HEK293 (cell line): ENCODE measurements at regions of chr6 and their contacts with region 1.

Region 1: GRCh38 chr6:99241905-99242534 is 107.5 kb downstream of the FAXC start:
- H3K4me3 ChIP-seq: no peak overlapping the region
- H3K27ac ChIP-seq: no peak overlapping the region
- H3K4me1 ChIP-seq: no peaks in the 10 kb centered on the region
- CTCF ChIP-seq: no peak; the same call in 1 of the 2 replicates

Region 2: GRCh38 chr6:99225172-99225571 is 16.8 kb before region 1 on chr6:
- CTCF ChIA-PET with region 1: interaction called, 21 read pairs
- POLR2A ChIA-PET with region 1: no interaction called
- H3K4me3 ChIP-seq: no peak overlapping the region
- H3K27ac ChIP-seq: no peak overlapping the region
- H3K4me1 ChIP-seq: no peaks in the 10 kb centered on the region
- CTCF ChIP-seq: no peak

Region 3: GRCh38 chr6:99254616-99255550 is 12.9 kb after region 1 on chr6:
- CTCF ChIA-PET with region 1: interaction called, 17 read pairs
- POLR2A ChIA-PET with region 1: no interaction called
- H3K4me3 ChIP-seq: no peak overlapping the region
- H3K27ac ChIP-seq: no peak overlapping the region
- H3K4me1 ChIP-seq: no peaks in the 10 kb centered on the region
- CTCF ChIP-seq: no peak